AG04450 (cell line): ENCODE measurements at regions of chr3 and their contacts with region 1.

Region 1: GRCh38 chr3:183895296-183895695 is 10.6 kb upstream of the PARL start:
- DNase-seq: peak; percentile 20
- H3K4me3 ChIP-seq: no peak overlapping the region
- H3K27ac ChIP-seq: no peak overlapping the region
- H3K27me3 ChIP-seq: peaks cover 16% of the 10 kb centered on the region
- CTCF ChIP-seq: peak; percentile 91

Region 2: GRCh38 chr3:183837390-183837789 is 57.9 kb before region 1 on chr3:
- CTCF ChIA-PET with region 1: no interaction called
- POLR2A ChIA-PET with region 1: no interaction called
- DNase-seq: no peak
- H3K4me3 ChIP-seq: no peak overlapping the region
- H3K27ac ChIP-seq: no peak overlapping the region
- H3K27me3 ChIP-seq: no peaks in the 10 kb centered on the region
- CTCF ChIP-seq: no peak

Region 3: GRCh38 chr3:183884427-183885296 is 10.6 kb before region 1 on chr3 and contains the start of gene PARL:
- CTCF ChIA-PET with region 1: interaction called, 26 read pairs
- POLR2A ChIA-PET with region 1: no interaction called
- DNase-seq: peak; percentile 57
- H3K4me3 ChIP-seq: peak within 1 kb of the TSS; percentile 97
- H3K27ac ChIP-seq: peak within 1 kb of the TSS; percentile 61
- H3K27me3 ChIP-seq: no peaks in the 10 kb centered on the region
- CTCF ChIP-seq: peak; percentile 93
- polyA plus RNA-seq, gene PARL: 45.9 and 46.2 TPM in 2 replicates

Region 4: DNA sequence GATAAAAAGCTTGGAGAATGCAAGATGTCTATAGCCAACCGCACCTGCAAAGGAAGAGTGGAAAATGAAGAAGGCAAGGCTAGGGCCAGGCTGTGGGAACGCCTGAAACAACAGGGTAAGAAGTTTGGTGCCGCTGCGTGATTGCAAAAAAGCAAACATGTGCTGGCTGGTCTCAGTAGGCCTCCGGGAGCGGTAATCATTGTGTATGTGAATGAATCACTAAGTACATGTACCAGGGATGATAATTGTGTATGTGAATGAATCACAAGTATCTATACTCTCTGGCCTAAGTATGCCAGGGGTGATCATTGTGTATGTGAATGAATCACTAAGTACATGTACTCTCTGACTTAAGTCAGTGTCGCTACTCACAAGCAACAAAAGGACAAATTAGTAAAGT is 29.7 kb after region 1 on chr3:
- CTCF ChIA-PET with region 1: no interaction called
- POLR2A ChIA-PET with region 1: no interaction called
- DNase-seq: peak; percentile 44
- H3K4me3 ChIP-seq: no peak overlapping the region
- H3K27ac ChIP-seq: peak overlapping the region; percentile 39
- H3K27me3 ChIP-seq: no peaks in the 10 kb centered on the region
- CTCF ChIP-seq: no peak

Region 5: DNA sequence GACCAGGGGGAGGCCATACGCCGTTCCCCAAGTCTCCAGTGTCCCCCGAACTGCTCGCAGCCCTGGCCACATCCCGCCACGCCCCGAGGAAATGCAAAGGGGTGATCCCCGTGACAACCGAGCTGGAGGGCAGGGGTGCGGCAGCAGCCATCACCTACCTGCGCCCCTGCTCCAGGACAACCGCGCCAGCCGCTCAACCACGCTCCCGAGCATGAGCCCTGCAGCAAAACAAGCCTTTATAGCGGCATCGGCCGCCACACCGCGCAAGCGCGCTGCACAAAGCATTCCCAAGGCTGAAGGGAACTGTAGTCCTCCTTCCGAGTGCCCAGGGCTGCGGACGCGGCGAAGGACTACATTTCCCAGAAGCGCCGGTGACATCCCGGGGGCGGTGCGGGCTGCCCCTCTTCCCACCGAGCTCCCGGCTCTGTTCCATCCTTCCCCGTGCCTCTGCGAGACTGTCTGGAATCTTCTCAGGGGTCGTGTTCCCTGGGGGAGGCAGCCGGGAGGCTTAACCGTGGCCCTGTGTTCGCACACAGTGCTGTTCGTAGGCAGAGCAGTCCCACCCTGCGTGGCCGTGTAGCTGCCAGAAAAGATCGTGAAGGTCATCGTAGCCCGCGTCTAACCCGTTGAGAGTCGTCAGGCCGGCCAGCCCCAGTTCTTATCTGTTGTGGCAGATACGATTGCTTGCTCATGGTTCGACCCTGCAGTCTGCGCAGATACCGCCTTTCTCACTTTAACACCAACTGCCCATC is 122.6 kb after region 1 on chr3 and contains the start of gene ABCC5:
- CTCF ChIA-PET with region 1: interaction called, 48 read pairs
- POLR2A ChIA-PET with region 1: no interaction called
- DNase-seq: peak; percentile 81
- H3K4me3 ChIP-seq: peak within 1 kb of the TSS; percentile 100
- H3K27ac ChIP-seq: peak within 1 kb of the TSS; percentile 31
- H3K27me3 ChIP-seq: peaks cover 3% of the 10 kb centered on the region
- CTCF ChIP-seq: 0 out of 2 replicates have a peak, but pooled peaks have one; percentile 1
- polyA plus RNA-seq, gene ABCC5: 27.4 and 30.6 TPM in 2 replicates

Region 6: DNA sequence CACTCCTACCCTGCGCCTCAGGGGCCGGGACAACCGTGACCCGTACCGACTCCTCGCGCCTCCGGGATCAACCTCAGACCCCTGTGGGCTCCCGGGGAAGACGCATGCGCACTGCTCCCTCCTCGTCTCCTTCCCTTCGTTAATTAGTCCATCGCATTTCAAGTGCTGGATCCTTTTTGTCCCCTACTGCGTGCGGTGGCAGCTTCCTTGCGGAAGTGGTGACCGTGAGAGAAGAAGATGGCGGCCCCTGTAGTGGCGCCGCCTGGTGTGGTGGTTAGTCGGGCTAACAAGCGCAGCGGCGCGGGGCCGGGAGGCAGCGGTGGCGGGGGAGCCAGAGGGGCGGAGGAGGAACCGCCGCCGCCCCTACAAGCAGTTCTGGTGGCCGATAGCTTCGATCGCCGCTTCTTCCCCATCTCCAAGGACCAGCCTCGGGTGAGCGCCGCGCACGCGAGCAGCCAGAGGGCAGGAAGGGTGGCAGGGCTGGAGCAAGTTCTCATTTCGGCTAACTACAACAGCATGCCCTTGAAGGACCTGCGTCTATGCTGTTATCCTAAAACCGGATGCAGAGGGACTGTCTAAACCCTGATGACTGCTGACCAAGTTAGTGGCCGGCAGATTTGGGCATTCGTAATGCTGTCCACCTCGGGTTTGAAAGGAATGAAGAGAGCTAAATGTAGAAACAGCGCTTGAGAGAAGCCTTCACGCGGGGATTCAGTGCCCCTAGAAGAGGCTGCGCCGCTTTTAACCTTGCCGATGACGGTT is 240.0 kb after region 1 on chr3 and contains the start of gene EIF2B5:
- CTCF ChIA-PET with region 1: interaction called, 12 read pairs
- POLR2A ChIA-PET with region 1: interaction called, 5 read pairs
- DNase-seq: peak; percentile 72
- H3K4me3 ChIP-seq: peak within 1 kb of the TSS; percentile 98
- H3K27ac ChIP-seq: peak within 1 kb of the TSS; percentile 57
- H3K27me3 ChIP-seq: no peaks in the 10 kb centered on the region
- CTCF ChIP-seq: peak; percentile 46
- polyA plus RNA-seq, gene EIF2B5: 28.8 and 29.8 TPM in 2 replicates

Region 7: GRCh38 chr3:184145111-184145524 is 249.8 kb after region 1 on chr3:
- CTCF ChIA-PET with region 1: interaction called, 10 read pairs
- POLR2A ChIA-PET with region 1: no interaction called
- DNase-seq: no peak
- H3K4me3 ChIP-seq: no peak overlapping the region
- H3K27ac ChIP-seq: peak overlapping the region; percentile 39
- H3K27me3 ChIP-seq: no peaks in the 10 kb centered on the region
- CTCF ChIP-seq: peak; percentile 48

Region 8: DNA sequence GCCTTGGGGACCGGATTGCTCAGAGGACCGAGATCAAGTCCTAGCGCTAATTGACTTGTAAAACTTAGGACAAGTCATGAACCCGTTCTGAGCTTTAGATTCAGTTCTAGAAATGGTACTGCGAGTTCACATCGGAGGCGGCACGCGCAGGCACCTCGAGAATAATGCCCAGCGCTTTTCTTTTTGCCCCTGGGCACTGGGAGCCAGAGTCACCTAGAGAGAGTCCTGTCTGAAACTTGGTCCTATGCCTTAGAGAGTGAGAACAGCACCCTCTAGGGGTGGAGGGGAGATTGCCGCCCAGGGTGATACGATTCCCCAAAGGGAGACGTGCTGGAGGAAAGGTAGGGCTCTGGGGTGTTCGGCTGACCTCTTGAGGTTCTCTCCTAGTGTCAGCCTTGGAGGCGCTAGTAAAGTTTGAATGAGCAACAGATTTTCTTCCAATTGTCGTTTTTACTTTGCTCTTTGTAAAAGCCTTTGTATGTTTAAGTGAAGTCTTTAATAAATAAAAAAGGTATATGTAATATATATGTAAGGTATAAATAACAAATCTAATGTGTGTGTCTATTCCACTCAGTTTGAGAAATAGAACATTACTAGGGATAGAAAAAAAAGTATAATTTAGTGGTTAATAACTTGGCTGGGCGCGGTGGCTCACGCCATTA is 355.0 kb after region 1 on chr3:
- CTCF ChIA-PET with region 1: interaction called, 22 read pairs
- POLR2A ChIA-PET with region 1: no interaction called
- DNase-seq: peak; percentile 61
- H3K4me3 ChIP-seq: peak overlapping the region; percentile 88
- H3K27ac ChIP-seq: peak overlapping the region; percentile 68
- H3K27me3 ChIP-seq: no peaks in the 10 kb centered on the region
- CTCF ChIP-seq: peak; percentile 97

Region 9: GRCh38 chr3:184289426-184289938 is 394.2 kb after region 1 on chr3:
- CTCF ChIA-PET with region 1: interaction called, 31 read pairs
- POLR2A ChIA-PET with region 1: no interaction called
- DNase-seq: no peak
- H3K4me3 ChIP-seq: no peak overlapping the region
- H3K27ac ChIP-seq: no peak overlapping the region
- H3K27me3 ChIP-seq: peaks cover 12% of the 10 kb centered on the region
- CTCF ChIP-seq: peak; percentile 71